ENCODE measurements at regions of chr9 and their contacts with region 1.

Region 1: GRCh38 chr9:107039542-107039941 is 176.6 kb downstream of the ZNF462 start:
- DNase-seq: peak; percentile 74
- ATAC-seq: peak; percentile 69
- H3K4me3 ChIP-seq: no peak overlapping the region
- H3K27ac ChIP-seq: no peak overlapping the region
- H3K4me1 ChIP-seq: no peaks in the 10 kb centered on the region
- H3K27me3 ChIP-seq: no peaks in the 10 kb centered on the region
- CTCF ChIP-seq: no peak
- EP300 ChIP-seq: peak in 1 of 2 experiments; percentile 62; a peak in 1 of 4 replicates
- POLR2A ChIP-seq: no peak
- RAD21 ChIP-seq: no peak

Region 2: DNA sequence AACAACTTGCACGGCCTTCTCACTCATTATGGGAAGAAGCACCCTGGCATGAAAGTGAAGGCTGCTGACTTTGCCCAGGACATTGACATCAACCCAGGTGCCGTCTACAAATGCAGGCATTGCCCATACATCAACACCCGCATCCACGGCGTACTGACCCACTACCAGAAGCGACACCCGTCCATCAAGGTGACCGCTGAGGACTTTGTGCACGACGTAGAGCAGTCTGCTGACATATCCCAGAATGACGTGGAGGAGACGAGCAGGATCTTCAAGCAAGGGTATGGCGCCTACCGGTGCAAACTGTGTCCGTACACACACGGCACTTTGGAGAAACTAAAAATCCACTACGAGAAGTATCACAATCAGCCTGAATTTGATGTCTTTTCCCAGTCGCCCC is 111.2 kb before region 1 on chr9:
- CTCF ChIA-PET with region 1: no interaction called
- POLR2A ChIA-PET with region 1: no interaction called
- RAD21 ChIA-PET with region 1: no interaction called
- SMC1A ChIA-PET with region 1: no interaction called
- in situ Hi-C with region 1: no loop called
- intact Hi-C with region 1: no loop called
- DNase-seq: no peak
- ATAC-seq: no peak
- H3K4me3 ChIP-seq: no peak overlapping the region
- H3K27ac ChIP-seq: no peak overlapping the region
- H3K4me1 ChIP-seq: no peaks in the 10 kb centered on the region
- H3K27me3 ChIP-seq: no peaks in the 10 kb centered on the region; a peak in 1 of 4 replicates
- CTCF ChIP-seq: no peak
- EP300 ChIP-seq: no peak
- POLR2A ChIP-seq: no peak
- RAD21 ChIP-seq: no peak

Region 3: DNA sequence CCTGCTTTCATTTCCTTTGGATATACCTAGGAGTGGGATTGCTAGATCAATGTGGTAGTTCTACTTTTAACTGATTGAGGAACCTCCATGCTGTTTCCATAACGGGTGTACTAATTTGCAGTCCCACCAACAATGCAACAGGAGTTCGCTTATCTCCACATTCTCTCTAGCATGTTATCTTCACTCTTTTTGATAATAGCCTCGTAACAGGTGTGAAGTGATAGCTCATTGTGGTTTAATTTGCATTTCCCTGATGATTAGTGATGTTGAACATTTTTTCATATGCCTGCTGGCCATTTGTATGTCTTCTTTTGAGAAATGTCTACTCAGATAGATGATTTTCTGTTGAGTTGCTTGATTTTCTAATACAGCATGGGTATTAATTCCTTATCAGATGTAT is 34.3 kb before region 1 on chr9:
- CTCF ChIA-PET with region 1: no interaction called
- POLR2A ChIA-PET with region 1: no interaction called
- RAD21 ChIA-PET with region 1: no interaction called
- SMC1A ChIA-PET with region 1: interaction called, 13 read pairs
- in situ Hi-C with region 1: no loop called
- intact Hi-C with region 1: no loop called
- DNase-seq: no peak
- ATAC-seq: peak; percentile 65
- H3K4me3 ChIP-seq: no peak overlapping the region
- H3K27ac ChIP-seq: no peak overlapping the region
- H3K4me1 ChIP-seq: no peaks in the 10 kb centered on the region
- H3K27me3 ChIP-seq: no peaks in the 10 kb centered on the region
- CTCF ChIP-seq: no peak
- EP300 ChIP-seq: no peak
- POLR2A ChIP-seq: no peak
- RAD21 ChIP-seq: no peak

Region 4: DNA sequence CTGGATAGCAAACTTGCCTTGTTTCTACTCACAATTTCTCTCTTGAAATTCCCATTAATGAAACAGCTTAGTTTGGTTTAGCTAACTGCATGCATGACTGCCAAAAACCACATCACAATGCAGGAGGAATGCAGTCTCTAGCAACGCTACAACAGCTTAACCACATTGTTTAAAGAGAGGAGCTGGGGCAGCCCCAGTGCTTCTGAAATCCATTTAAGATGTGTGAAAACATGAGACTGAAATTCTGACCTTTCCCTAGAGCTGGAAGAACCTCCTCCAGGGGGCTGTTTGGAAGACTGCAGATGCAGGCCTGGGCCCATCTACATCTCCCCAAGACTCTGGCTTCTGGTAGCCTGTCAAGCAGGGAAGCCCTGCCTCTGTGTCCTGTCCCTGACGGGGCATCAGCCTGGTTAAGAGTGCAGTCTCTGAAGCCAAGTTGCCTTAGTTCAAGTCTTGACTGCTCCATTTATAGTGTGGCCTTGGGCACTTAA is 19.5 kb before region 1 on chr9:
- CTCF ChIA-PET with region 1: interaction called, 6 read pairs
- POLR2A ChIA-PET with region 1: interaction called, 3 read pairs
- RAD21 ChIA-PET with region 1: interaction called, 5 read pairs
- SMC1A ChIA-PET with region 1: interaction called, 12 read pairs
- in situ Hi-C with region 1: no loop called
- intact Hi-C with region 1: no loop called
- DNase-seq: peak; percentile 50
- ATAC-seq: peak; percentile 84
- H3K4me3 ChIP-seq: no peak overlapping the region
- H3K27ac ChIP-seq: no peak overlapping the region
- H3K4me1 ChIP-seq: peaks cover 6% of the 10 kb centered on the region; the same call in 1 of the 2 replicates
- H3K27me3 ChIP-seq: no peaks in the 10 kb centered on the region
- CTCF ChIP-seq: no peak
- EP300 ChIP-seq: peak; percentile 70 to 78; a peak in 2 of 4 replicates
- POLR2A ChIP-seq: no peak
- RAD21 ChIP-seq: no peak

Region 5: GRCh38 chr9:107112707-107113243 is 73.2 kb after region 1 on chr9:
- CTCF ChIA-PET with region 1: no interaction called
- POLR2A ChIA-PET with region 1: interaction called, 3 read pairs
- RAD21 ChIA-PET with region 1: no interaction called
- SMC1A ChIA-PET with region 1: interaction called, 3 read pairs
- in situ Hi-C with region 1: no loop called
- intact Hi-C with region 1: loop called (anchors 1 kb)
- DNase-seq: peak; percentile 27
- ATAC-seq: peak; percentile 96
- H3K4me3 ChIP-seq: no peak overlapping the region
- H3K27ac ChIP-seq: no peak overlapping the region; the same call in 1 of the 2 replicates
- H3K4me1 ChIP-seq: peaks cover 14% of the 10 kb centered on the region
- H3K27me3 ChIP-seq: no peaks in the 10 kb centered on the region; a peak in 1 of 4 replicates
- CTCF ChIP-seq: no peak
- EP300 ChIP-seq: 0 out of 4 replicates have a peak, but pooled peaks of 1 of the 2 experiments have one; percentile 27
- POLR2A ChIP-seq: no peak
- RAD21 ChIP-seq: no peak

Region 6: DNA sequence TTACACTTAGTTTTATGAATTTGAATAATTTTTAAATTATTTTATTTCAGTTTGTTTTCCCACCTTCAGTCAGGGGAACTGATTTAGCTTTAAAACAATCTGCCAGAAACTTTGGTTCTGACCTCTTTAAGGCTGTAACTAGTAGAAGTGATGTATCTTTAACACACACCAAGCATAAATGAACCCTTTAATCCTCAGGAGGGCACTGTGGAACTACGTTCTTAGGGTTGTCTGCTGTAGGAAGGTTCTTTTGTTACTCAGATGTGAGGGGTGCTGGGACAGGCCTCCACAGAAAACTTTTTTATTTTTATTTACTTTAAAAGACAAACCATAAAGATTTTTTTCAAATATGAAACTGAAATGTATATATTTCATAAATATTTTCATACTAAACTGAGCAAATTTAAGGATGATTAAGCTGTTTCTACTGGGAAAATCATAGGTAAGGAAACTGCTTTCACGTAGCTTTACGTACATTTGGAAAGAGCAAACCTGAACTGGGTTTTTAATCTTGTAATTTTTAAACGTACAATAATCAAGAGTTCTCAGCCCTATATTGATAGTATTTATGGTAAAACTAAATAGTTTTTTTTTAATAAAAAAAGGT is 444.7 kb after region 1 on chr9:
- CTCF ChIA-PET with region 1: no interaction called
- POLR2A ChIA-PET with region 1: no interaction called
- RAD21 ChIA-PET with region 1: no interaction called
- SMC1A ChIA-PET with region 1: no interaction called
- in situ Hi-C with region 1: no loop called
- intact Hi-C with region 1: no loop called
- DNase-seq: peak; percentile 7
- ATAC-seq: peak; percentile 91
- H3K4me3 ChIP-seq: no peak overlapping the region
- H3K27ac ChIP-seq: no peak overlapping the region
- H3K4me1 ChIP-seq: 0 out of 2 replicates have a peak, but pooled peaks cover 2% of the 10 kb centered on the region
- H3K27me3 ChIP-seq: peaks cover 4 to 15% of the 10 kb centered on the region in 2 experiments; a peak in 3 of 4 replicates
- CTCF ChIP-seq: peak; percentile 38 to 61 (median 45); a peak in 5 of 6 replicates
- EP300 ChIP-seq: no peak
- POLR2A ChIP-seq: no peak
- RAD21 ChIP-seq: peak; percentile 82

Measured in GM12878 (cell line).